GM13977 (cell line): ENCODE measurements at regions of chrX and their contacts with region 1.

Region 1: DNA sequence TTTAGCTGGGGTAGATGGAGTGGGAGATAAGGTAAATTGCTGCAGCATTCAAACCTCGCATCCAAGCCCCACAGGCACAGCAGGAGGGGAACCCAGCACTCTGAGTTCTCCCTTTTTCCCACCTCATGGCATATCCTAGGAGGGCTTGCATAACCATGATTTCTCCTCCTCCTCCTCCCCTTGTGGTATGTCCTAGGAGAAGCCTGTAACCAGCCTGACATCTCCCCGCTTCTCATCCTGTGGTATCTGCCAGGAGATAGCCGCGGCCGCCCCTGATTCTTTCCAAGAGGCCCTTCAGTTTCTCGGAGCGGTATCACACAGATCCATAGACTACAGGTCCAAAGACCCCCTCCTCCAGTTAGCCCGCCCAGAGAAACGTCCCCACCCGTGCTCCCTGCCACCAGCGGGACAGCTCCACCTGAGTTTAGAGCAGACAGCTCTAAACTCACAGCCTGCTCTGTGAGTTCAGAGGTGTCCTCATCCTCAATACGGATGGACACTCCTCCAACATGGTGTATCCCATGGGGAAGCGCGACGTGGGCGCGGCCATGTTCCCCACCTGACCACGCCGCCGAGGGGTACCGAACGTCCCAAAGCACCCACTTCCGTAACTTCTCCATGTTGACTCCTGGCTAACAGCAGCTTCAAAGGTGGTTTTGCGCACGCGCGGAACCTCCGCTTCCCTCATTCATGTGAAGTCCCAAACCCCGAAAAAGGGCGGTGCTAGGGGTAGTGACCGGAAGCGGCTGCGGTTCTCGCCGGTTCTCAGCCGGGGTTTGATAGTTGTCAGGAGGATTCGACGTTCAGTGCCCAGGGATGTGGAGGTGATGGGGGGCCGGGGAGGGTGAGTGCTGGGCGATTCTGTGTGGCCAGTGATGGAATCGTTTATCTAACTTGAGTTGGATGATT is at the start of gene ZNF81:
- DNase-seq: peak; percentile 73
- CTCF ChIP-seq: no peak

Region 2: DNA sequence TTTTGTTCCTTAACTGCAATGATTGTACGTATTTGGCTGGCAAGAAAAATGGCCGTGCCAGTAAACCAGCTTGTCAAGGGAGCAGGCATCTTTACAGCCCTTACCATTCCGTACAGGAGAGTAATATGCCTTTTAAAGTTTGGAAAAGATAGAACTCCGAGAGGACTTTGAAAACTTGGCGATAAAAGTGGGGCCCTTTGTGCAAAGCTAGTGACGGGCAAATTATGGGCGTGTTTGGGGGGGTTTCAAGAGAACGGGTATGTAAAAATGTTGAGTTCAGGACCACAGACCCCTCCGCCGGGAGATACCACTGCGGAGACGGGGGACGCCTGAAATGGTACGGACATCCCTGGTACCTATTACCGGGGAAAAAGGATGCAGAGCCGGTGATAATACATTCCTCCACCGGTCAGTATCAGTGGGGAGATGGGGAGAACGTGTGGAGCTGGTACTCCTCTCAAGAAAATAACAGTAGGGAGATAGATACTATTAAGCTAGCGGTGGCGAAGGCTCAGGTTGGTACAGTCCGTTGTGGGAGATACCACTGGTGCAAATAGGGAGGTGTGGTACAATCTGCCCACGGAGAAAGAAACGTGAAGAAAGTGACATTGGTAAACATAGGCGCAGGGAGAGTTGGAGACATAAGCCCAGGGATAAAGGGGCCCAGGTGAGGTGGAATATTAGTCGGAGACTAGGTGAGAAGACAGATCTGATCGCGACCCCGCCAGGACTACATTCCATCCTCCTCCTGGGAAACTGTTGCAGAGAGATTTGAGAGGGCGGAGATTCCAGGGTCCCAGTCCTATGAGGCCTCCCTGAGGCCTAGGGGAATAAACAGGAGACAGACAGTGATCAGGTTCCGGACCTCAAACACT is 184.8 kb after region 1 on chrX:
- in situ Hi-C with region 1: loop called (anchors 10 kb)
- DNase-seq: peak; percentile 55
- CTCF ChIP-seq: no peak